Head of caudate nucleus (tissue), 42 donors: ENCODE measurements at regions of chr1 and their contacts with region 1.

Region 1: GRCh38 chr1:33430692-33431593 is at the start of gene PHC2:
- DNase-seq: peak; percentile 99 to 100 (median 100)

Region 2: DNA sequence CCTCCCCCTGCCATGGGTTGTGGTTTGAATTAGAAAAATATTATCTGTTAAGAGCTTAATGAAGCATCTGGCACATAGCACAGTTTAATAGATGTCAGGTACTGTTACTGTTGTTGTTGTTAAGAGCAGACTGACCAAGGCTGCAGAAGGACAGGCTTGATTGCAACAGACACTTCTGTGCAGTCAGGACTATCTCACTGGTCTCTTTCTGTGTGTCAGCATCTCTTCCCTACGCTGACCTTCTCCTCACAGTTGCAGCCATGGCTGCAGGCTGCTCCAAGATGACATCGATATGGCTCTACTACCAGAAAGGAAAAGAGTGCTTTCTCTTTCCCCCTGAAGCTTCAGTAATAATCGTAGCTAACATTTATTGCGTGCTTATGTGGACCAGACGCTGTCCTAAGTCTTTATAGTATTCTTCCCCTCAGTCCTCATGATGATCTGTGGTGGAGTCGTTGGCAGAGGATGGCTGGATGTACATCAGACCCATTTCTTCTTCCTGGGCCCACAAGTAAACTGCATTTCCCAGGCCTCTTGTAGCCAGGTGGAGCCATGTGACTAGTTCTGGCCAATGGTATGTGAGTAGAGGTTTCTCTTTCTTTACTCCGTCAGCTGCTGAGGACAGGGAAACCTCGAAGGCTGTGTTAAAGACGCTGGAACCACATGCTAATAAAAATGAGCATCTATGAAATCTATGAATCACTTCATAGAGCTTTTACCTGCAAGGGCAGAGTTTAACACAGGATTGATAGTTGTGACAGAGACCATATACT is 193.6 kb before region 1 on chr1:
- intact Hi-C with region 1: no loop called
- DNase-seq: peak in 6 of 42 donors; percentile 14 to 48 (median 21)

Region 3: DNA sequence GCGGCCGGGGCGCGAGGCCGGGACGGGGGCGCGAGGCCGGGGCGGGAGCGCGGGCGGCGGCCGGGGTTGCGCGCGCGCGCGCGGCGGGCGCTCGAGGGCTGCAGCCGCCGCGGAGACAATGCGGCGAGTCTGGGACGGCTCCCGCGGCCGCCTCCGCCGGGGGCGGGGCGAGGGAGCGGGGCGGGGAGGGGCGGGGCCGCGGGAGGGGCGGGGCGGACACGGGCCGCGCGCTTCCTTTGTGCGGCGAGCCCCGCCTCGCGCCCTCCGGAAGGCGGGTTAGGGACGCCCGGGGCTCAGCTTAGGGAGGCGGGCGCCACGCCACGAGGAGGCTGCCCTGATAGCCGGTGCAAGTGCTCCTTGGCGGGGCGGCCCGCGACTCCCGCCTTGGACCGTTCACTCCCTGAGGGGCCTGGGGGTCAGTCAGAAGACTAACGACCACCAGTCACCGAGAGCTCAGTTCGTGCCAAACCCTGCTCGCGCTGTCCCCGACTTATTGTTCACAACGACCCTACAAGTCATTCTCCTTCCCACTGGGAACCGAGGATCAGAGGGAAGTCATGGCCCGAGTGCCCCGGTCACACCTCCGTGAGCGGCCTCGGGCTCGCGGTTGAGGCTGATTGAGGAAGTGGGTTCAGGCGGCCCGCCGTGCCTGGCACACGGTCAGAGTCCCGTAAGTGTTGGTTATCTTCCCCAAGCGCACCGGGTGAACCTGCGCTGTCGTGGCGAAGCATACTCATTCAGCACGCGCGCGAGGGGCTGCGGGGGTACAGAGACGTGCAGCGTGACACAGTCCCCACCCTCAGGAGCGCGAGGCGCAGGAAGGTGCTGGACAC is 80.9 kb before region 1 on chr1:
- intact Hi-C with region 1: loop called (anchors 5 kb)
- DNase-seq: peak; percentile 59 to 93 (median 84)

Region 4: GRCh38 chr1:33388805-33389771 is 41.9 kb before region 1 on chr1:
- intact Hi-C with region 1: loop called (anchors 5 kb)
- DNase-seq: peak in 37 of 42 donors; percentile 40 to 91 (median 74)